Heart left ventricle (tissue), 16 donors: ENCODE measurements at regions of chr16 and their contacts with region 1.

Region 1: DNA sequence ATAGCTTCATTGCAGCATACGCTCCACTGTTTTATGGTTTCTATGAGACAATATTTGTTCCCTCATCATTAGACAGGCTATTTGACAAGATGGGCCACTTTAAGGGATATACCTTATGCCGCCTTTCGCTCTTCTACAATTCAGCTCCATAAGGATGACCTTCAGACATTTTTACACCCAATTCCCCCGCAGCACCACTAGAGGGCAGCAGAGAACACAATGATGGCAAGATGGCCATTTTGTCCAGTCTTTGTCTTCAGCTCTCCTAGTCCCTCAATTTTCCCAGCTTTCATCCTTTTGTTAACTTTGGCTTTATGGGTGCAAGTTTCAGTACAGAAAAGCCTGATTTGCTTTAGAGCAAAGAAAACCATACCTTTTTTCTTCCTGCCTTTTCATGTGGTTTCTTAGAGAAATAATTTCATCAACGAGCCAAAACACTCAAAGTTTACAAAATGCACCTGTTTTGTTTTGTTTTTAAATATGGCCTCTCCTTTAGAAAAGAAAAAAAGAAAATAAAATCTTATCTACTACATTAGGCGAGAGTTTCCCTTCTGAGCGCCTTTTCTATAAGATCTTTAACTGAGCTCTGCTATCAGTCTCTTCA is 355.3 kb downstream of the TOX3 start:
- DNase-seq: peak in 4 of 5 donors; percentile 23 to 61 (median 30)
- ATAC-seq: peak in 3 of 4 donors; percentile 39 to 57 (median 51)
- H3K4me3 ChIP-seq: no peak overlapping the region
- H3K27ac ChIP-seq: no peak overlapping the region
- H3K4me1 ChIP-seq: no peaks in the 10 kb centered on the region
- H3K27me3 ChIP-seq: peaks cover 0 to 6% (median 0%) of the 10 kb centered on the region in 9 donors
- CTCF ChIP-seq: peak; percentile 73 to 95 (median 88)
- POLR2A ChIP-seq: no peak

Region 2: DNA sequence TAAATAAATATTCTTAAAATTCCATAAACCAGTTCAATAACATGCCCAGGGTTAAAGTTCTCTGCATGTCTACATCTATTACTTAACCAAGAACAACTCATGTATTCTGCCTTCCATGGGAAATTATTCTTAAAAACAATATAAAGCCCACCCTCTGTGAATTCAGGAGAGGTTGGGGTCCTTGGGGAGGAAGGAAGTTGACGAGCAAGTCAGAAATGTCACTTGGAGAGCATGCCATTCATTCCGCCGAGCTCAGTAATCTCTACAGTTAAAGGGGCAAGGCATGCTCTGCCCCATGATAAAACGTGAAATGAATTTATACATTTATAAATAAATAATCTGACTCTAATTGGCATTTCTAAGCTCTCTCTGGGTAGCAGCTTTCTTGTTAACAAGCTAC is 49.8 kb before region 1 on chr16:
- intact Hi-C with region 1: no loop called
- DNase-seq: no peak
- ATAC-seq: no peak
- H3K4me3 ChIP-seq: no peak overlapping the region
- H3K27ac ChIP-seq: peak overlapping the region in 1 of 12 donors; percentile 54
- H3K4me1 ChIP-seq: no peaks in the 10 kb centered on the region
- H3K27me3 ChIP-seq: no peaks in the 10 kb centered on the region
- CTCF ChIP-seq: no peak
- POLR2A ChIP-seq: no peak

Region 3: GRCh38 chr16:52408191-52408845 is 216.7 kb after region 1 on chr16:
- intact Hi-C with region 1: no loop called
- DNase-seq: no peak
- ATAC-seq: no peak
- H3K4me3 ChIP-seq: no peak overlapping the region
- H3K27ac ChIP-seq: no peak overlapping the region
- H3K4me1 ChIP-seq: no peaks in the 10 kb centered on the region
- H3K27me3 ChIP-seq: no peaks in the 10 kb centered on the region
- CTCF ChIP-seq: no peak
- POLR2A ChIP-seq: no peak

Region 4: GRCh38 chr16:52912565-52913173 is 721.0 kb after region 1 on chr16:
- intact Hi-C with region 1: loop called (anchors 1 to 5 kb)
- DNase-seq: peak in 3 of 5 donors; percentile 29 to 43 (median 42)
- ATAC-seq: peak in 2 of 4 donors; percentile 59 to 61
- H3K4me3 ChIP-seq: no peak overlapping the region
- H3K27ac ChIP-seq: no peak overlapping the region
- H3K4me1 ChIP-seq: no peaks in the 10 kb centered on the region
- H3K27me3 ChIP-seq: no peaks in the 10 kb centered on the region
- CTCF ChIP-seq: peak; percentile 53 to 78 (median 69)
- POLR2A ChIP-seq: no peak

Region 5: GRCh38 chr16:53022374-53022773 is 830.7 kb after region 1 on chr16:
- intact Hi-C with region 1: loop called (anchors 2 to 10 kb)
- DNase-seq: peak in 2 of 5 donors; percentile 22 to 23
- ATAC-seq: peak; percentile 51 to 83 (median 77)
- H3K4me3 ChIP-seq: no peak overlapping the region
- H3K27ac ChIP-seq: no peak overlapping the region
- H3K4me1 ChIP-seq: no peaks in the 10 kb centered on the region
- H3K27me3 ChIP-seq: no peaks in the 10 kb centered on the region
- CTCF ChIP-seq: peak in 10 of 12 donors; percentile 36 to 65 (median 58)
- POLR2A ChIP-seq: no peak